Activated CD4-positive, alpha-beta memory T cell treated with anti-CD3 and anti-CD28 coated beads for 36 hours (primary cell): ENCODE measurements at regions of chr2 and their contacts with region 1.

Region 1: GRCh38 chr2:33583194-33583938 is 15.7 kb downstream of the FAM98A start:
- DNase-seq: peak; percentile 25
- H3K4me3 Mint-ChIP-seq: no peak overlapping the region
- H3K27ac Mint-ChIP-seq: no peak overlapping the region
- H3K4me1 Mint-ChIP-seq: peaks cover 10% of the 10 kb centered on the region
- H3K27me3 Mint-ChIP-seq: no peaks in the 10 kb centered on the region

Region 2: DNA sequence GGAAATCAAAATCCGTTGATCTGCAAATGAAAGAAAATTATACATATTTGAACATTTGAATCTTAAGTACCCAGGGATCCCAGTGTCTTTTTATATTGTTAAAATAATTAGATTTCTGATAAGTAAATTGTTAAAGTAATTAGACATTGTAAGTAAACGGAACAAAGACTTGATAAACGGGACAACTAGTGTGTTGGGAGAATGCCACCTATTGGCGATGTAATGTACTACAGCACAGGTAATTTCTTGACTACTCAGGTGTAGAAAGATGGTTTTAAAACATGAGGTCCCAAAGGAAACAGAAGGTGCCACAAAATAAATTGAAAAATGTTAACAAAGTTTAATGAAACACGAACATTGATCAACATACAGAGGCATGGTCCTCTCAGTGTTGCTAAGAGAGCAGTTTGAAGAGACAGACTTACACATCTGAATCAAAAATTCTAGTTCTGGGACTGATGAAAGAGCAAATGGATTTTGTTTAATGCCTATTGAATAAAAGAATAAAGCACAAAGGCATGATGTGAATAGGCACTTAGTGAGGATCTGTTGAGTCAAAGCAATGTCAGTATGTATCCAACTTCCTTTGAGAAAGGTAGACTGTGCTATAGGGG is 210.3 kb before region 1 on chr2:
- CTCF ChIA-PET with region 1: interaction called, 19 read pairs
- POLR2A ChIA-PET with region 1: no interaction called
- intact Hi-C with region 1: no loop called
- DNase-seq: no peak
- H3K4me3 Mint-ChIP-seq: no peak overlapping the region
- H3K27ac Mint-ChIP-seq: no peak overlapping the region
- H3K4me1 Mint-ChIP-seq: no peaks in the 10 kb centered on the region
- H3K27me3 Mint-ChIP-seq: peaks cover 2% of the 10 kb centered on the region

Region 3: DNA sequence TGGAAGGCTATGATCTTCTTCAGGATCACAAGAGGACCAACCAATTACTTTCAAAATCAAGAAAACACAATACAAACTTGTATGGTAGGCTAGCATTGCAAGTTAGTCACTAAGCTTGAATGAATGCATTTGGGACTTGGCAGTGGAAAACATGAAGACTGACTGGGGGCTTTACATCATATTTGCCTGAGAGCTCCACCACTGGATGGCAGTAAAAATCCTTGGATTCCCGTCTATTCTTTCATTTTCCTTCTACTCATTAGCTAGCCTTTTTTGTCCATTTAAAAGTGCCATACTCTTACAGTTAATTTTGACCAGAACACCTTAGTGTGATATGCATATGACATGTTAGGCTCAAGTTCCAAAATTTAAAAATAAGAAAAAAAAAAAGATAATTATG is 170.4 kb before region 1 on chr2:
- CTCF ChIA-PET with region 1: interaction called, 10 read pairs
- POLR2A ChIA-PET with region 1: no interaction called
- intact Hi-C with region 1: loop called (anchors 5 kb)
- DNase-seq: no peak
- H3K4me3 Mint-ChIP-seq: no peak overlapping the region
- H3K27ac Mint-ChIP-seq: no peak overlapping the region
- H3K4me1 Mint-ChIP-seq: no peaks in the 10 kb centered on the region
- H3K27me3 Mint-ChIP-seq: peaks cover 7% of the 10 kb centered on the region

Region 4: DNA sequence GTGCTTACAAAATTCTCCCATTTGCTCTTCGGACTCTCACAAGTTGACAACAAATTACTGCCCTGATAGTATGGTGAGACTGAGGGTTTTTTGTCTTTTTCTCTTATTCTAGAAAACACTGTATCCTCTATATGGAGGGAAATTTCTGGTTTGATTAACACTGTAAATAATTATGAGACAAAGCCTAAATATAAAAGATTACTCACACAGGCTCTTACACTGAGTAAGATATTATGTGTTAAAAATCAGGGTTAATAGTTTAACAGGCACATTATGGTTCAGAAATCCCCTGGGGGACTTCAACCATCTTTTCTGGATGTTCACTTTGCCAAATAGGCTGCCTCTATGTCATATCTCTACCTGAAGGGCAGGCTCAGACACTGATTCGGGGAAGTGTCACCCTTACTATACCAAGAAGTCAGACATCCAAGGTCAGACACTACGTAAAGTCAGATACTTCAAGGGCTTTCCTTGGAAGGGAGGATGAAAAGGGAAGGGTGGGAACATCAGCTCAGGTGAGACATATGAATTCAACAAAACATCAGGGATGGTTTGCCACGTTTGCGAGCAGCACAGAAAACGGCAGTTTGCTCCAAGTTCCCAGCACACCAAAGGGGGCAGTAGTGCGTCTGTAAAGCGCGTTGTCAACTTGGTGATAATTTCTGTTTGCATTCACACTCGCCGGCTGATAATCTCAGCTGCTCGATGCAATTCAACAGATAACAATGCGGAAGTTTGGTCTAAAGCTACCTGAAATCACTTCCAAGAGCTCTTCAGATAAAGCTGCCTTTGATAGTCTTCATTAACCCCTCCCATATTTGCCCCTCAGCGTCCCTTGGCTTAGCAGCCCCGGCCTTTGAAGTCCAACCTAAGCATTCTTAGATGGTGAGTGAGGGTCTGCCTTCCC is 107.9 kb before region 1 on chr2:
- CTCF ChIA-PET with region 1: interaction called, 35 read pairs
- POLR2A ChIA-PET with region 1: no interaction called
- intact Hi-C with region 1: loop called (anchors 1 kb)
- DNase-seq: peak; percentile 85
- H3K4me3 Mint-ChIP-seq: peak overlapping the region; percentile 80
- H3K27ac Mint-ChIP-seq: peak overlapping the region; percentile 86
- H3K4me1 Mint-ChIP-seq: peaks cover 33% of the 10 kb centered on the region
- H3K27me3 Mint-ChIP-seq: no peaks in the 10 kb centered on the region

Region 5: DNA sequence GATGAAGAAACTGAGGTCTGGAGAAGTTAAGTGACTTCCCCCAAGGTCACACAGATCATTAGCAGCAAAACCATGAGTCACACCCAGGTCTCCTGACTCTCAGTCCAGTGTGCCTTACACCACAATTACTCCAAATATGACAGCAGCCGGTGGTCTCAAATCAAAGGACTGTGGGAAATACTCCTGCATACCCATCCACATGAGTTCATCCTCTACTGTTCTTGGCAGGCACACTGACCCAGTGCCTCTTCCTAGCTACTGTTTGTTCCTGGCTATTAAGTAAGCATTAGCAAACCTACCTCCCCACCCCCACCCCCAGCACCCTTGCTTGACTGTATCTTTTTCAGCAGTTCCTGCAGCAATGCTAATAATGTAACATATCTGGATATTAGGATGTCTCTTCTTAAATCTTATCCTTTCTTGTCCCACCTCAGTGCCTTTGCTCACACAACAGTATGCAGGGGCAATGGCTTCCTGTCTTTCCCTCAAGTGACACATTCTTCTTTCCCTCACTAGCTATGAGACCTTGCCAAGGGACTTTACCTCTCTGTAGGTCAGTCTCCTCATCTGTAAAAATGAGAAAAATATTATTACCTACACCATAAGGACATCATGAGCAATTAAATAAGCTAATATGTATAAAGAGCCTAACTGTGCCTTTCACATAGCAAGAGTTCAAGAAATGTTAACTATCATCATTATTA is 30.5 kb before region 1 on chr2:
- CTCF ChIA-PET with region 1: no interaction called
- POLR2A ChIA-PET with region 1: no interaction called
- intact Hi-C with region 1: no loop called
- DNase-seq: no peak
- H3K4me3 Mint-ChIP-seq: no peak overlapping the region
- H3K27ac Mint-ChIP-seq: no peak overlapping the region
- H3K4me1 Mint-ChIP-seq: no peaks in the 10 kb centered on the region
- H3K27me3 Mint-ChIP-seq: no peaks in the 10 kb centered on the region

Region 6: GRCh38 chr2:33599175-33599942 is 16.0 kb after region 1 on chr2 and contains the start of gene FAM98A:
- CTCF ChIA-PET with region 1: interaction called, 28 read pairs
- POLR2A ChIA-PET with region 1: interaction called, 12 read pairs
- intact Hi-C with region 1: no loop called
- DNase-seq: peak; percentile 99
- H3K4me3 Mint-ChIP-seq: peak within 1 kb of the TSS; percentile 90
- H3K27ac Mint-ChIP-seq: peak within 1 kb of the TSS; percentile 82
- H3K4me1 Mint-ChIP-seq: peaks cover 22% of the 10 kb centered on the region
- H3K27me3 Mint-ChIP-seq: no peaks in the 10 kb centered on the region
- total RNA-seq, gene FAM98A: 46.7 to 46.8 TPM